Vagina (tissue), 2 donors: ENCODE measurements at regions of chr6 and their contacts with region 1.

Region 1: DNA sequence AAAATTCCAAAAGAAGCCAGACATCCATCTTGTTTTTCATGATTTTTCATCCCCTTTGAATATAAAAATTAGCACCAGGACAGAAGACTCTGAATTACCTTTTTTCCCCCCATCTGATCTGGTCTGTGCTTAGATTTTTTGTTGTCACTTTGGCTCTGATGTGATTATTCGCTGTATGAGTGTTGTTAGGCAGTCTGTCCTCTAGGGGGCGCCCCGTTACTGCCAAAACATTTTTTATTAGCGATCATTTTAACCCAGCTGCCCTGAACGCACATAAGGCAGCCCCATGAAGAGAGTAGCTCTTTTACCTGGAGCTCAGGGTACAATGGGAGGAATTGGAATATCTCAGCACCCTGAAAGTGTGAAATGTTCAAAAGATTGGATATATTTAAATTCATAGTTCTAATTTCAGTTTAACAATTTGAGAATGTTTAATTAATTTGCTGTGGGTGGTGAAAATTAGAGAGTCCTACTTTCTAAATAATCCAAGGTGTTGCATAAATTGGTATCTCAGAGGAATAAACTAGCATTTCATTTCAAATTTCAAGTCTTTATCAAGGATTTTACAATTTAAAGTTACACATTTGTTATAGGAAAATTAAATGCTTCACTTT is 60.8 kb downstream of the PRPH2 start:
- DNase-seq: no peak
- H3K4me3 ChIP-seq: no peak overlapping the region
- H3K27ac ChIP-seq: no peak overlapping the region
- H3K4me1 ChIP-seq: no peaks in the 10 kb centered on the region
- H3K27me3 ChIP-seq: no peaks in the 10 kb centered on the region
- CTCF ChIP-seq: peak; percentile 80 to 96 (median 91)
- POLR2A ChIP-seq: no peak

Region 2: DNA sequence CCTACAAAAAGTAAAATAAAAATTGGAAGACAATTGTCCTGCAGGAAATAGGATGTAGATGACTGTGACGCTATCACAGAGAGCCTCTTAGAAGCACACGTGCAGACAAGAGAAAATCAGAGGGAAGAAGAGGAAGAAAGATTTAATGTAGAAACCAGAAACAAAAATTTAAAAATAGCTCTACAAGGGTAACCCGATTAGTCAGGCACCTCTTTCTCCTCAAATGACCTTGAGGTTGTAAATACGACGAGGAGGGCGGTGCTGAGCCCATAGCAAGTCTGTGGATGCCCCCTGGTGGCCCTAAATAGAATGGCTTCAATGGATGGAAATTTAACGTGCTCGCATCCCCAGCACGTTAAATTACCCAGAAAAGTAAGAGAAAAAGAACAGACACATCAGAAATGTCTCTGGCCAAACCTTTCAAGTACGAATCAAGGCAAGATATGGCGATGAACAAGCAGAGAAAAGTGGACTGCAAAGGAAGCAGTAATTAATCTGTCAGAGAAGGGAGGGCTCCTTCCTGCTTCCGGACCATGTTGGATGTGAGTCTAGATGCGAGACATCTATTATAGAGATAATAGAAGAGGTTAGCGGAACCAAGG is 64.9 kb after region 1 on chr6:
- intact Hi-C with region 1: loop called (anchors 5 kb)
- DNase-seq: no peak
- H3K4me3 ChIP-seq: peak overlapping the region; percentile 50 to 62
- H3K27ac ChIP-seq: peak overlapping the region; percentile 87
- H3K4me1 ChIP-seq: peaks cover 17% of the 10 kb centered on the region
- H3K27me3 ChIP-seq: no peaks in the 10 kb centered on the region
- CTCF ChIP-seq: peak; percentile 84 to 94 (median 93)
- POLR2A ChIP-seq: no peak